Mammary epithelial cell (primary cell): ENCODE measurements at regions of chr11 and their contacts with region 1.

Region 1: DNA sequence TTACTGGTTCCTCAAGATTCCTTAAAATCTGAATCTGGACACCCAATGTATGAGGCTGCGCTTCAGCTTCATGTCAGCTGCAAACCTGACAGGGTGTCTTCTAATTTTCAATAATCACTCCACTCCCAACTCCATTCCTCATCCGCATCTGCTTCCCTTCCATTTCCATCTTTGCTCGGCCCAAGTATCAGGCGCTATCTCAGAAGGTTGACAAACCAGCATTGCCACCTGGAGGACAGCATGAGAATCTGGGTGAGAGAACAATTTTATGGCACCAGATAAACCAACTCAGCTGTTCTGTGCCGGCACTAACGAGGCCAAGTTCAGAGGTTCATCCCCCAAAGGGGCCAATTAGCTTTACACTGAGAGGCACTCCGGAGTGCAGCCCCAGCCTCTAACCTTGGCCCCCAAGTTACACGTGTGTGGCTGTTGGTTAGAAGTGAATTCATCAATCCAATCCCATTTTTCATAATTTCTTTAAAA is 79.1 kb upstream of the LMO2 start:
- DNase-seq: peak; percentile 42
- H3K4me3 ChIP-seq: no peak overlapping the region
- H3K27ac ChIP-seq: no peak overlapping the region
- H3K4me1 ChIP-seq: no peaks in the 10 kb centered on the region
- H3K27me3 ChIP-seq: no peaks in the 10 kb centered on the region
- CTCF ChIP-seq: peak; percentile 63 to 79

Region 2: GRCh38 chr11:33808228-33808828 is 162.7 kb before region 1 on chr11:
- CTCF ChIA-PET with region 1: no interaction called
- dilution Hi-C with region 1: no loop called
- in situ Hi-C with region 1: no loop called
- intact Hi-C with region 1: loop called (anchors 1 kb)
- DNase-seq: peak; percentile 58
- H3K4me3 ChIP-seq: no peak overlapping the region
- H3K27ac ChIP-seq: no peak overlapping the region
- H3K4me1 ChIP-seq: no peaks in the 10 kb centered on the region
- H3K27me3 ChIP-seq: no peaks in the 10 kb centered on the region
- CTCF ChIP-seq: peak; percentile 92 to 93

Region 3: GRCh38 chr11:33835143-33835878 is 135.7 kb before region 1 on chr11:
- CTCF ChIA-PET with region 1: no interaction called
- dilution Hi-C with region 1: no loop called
- in situ Hi-C with region 1: no loop called
- intact Hi-C with region 1: loop called (anchors 1 kb)
- DNase-seq: peak; percentile 76
- H3K4me3 ChIP-seq: no peak overlapping the region
- H3K27ac ChIP-seq: no peak overlapping the region
- H3K4me1 ChIP-seq: peaks cover 17% of the 10 kb centered on the region
- H3K27me3 ChIP-seq: no peaks in the 10 kb centered on the region
- CTCF ChIP-seq: peak; percentile 23 to 41

Region 4: DNA sequence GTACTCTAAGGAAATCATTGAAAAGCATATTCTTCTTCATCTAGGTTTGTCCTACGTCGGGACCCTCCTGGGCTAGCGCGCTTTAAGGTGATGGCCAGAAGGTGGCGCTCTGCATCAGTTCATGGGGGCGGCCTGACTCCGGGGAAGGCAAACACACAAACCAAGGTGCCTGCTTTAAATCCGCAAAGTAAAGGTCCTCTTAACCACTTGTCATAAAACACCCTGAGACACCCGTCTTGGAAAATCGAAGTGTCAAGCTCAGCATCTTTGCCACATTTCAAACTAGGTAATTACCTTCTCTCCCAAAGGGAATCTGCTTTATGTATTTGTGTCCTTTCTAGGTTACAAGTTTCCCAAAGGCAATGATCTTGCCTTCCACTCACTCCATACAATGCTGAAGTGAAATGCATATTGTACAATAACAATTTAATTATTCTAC is 113.1 kb before region 1 on chr11:
- CTCF ChIA-PET with region 1: interaction called, 3 read pairs
- dilution Hi-C with region 1: no loop called
- in situ Hi-C with region 1: loop called (anchors 5 to 10 kb)
- intact Hi-C with region 1: loop called (anchors 1 kb)
- DNase-seq: peak; percentile 35
- H3K4me3 ChIP-seq: no peak overlapping the region
- H3K27ac ChIP-seq: no peak overlapping the region
- H3K4me1 ChIP-seq: no peaks in the 10 kb centered on the region
- H3K27me3 ChIP-seq: no peaks in the 10 kb centered on the region
- CTCF ChIP-seq: peak; percentile 69 to 97

Region 5: DNA sequence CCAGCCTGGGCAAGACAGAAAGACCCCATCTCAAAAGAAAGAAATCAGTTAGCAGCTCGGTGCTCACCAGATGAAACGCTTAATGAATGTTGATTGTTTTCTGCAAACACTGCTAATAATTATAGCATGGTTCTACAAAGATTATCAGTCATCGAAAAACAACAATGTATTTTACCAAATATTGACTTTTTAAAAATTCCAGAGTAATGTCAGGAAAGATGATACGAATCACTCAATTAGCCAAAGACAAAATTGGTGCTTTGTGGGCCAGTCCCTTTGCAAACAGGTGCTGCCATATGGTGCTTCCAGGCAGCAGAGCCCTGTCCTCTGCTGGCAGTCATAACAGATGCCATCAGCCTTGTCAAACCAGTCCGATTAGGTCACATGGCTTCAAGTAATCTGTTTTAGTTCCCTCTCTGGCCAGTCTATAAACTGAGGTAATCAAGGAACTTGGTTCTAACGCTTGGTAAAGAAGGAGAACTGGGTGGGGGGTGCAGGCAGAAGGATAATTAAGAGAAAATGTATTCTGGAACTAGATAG is 31.3 kb after region 1 on chr11:
- CTCF ChIA-PET with region 1: no interaction called
- dilution Hi-C with region 1: no loop called
- in situ Hi-C with region 1: no loop called
- intact Hi-C with region 1: no loop called
- DNase-seq: no peak
- H3K4me3 ChIP-seq: no peak overlapping the region
- H3K27ac ChIP-seq: no peak overlapping the region
- H3K4me1 ChIP-seq: peaks cover 7% of the 10 kb centered on the region
- H3K27me3 ChIP-seq: no peaks in the 10 kb centered on the region
- CTCF ChIP-seq: no peak

Region 6: GRCh38 chr11:34288492-34288891 is 317.5 kb after region 1 on chr11:
- CTCF ChIA-PET with region 1: no interaction called
- dilution Hi-C with region 1: no loop called
- in situ Hi-C with region 1: no loop called
- intact Hi-C with region 1: no loop called
- DNase-seq: no peak
- H3K4me3 ChIP-seq: no peak overlapping the region
- H3K27ac ChIP-seq: no peak overlapping the region
- H3K4me1 ChIP-seq: no peaks in the 10 kb centered on the region
- H3K27me3 ChIP-seq: no peaks in the 10 kb centered on the region
- CTCF ChIP-seq: no peak

Region 7: DNA sequence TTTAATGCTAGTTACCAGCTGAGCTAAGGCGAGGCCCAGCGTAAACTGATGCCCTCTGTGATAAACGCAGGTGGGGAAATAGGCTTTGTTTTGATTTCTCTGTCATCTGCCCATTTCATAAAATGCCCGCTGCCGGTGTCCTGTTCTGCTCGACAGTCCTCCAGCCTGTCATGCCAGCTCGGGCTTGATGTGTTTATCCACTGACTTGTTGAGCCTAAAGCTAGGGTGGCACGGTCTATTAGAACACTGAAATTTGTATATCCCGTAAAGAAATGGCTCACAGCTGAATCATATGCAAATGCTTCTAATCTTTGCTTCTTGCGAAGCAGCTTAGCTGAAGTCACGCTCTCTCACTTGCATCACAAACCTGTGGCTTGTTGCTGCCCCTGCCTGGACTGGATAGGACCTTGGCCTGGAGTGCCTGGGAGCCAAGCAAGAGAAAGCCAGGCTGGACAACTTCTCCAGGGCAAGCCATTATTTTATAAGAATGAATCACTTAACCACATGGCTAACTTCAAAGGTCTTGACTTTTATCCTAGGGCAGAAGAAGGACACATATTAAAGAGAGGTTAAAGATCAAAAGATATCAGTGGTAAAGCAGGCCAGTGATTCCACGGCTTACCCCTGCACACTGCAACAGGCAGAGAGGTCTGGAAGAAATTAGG is 682.9 kb after region 1 on chr11:
- CTCF ChIA-PET with region 1: no interaction called
- dilution Hi-C with region 1: no loop called
- in situ Hi-C with region 1: no loop called
- intact Hi-C with region 1: no loop called
- DNase-seq: peak; percentile 98
- H3K4me3 ChIP-seq: no peak overlapping the region
- H3K27ac ChIP-seq: peak overlapping the region; percentile 78
- H3K4me1 ChIP-seq: peaks cover 42% of the 10 kb centered on the region
- H3K27me3 ChIP-seq: no peaks in the 10 kb centered on the region
- CTCF ChIP-seq: peak in 1 of 2 donors; percentile 50